Activated naive CD4-positive, alpha-beta T cell treated with anti-CD3 and anti-CD28 coated beads for 36 hours (primary cell): ENCODE measurements at regions of chr12 and their contacts with region 1.

Region 1: GRCh38 chr12:89040146-89040964 is 311.9 kb downstream of the DUSP6 start:
- DNase-seq: peak; percentile 94
- H3K4me3 Mint-ChIP-seq: no peak overlapping the region
- H3K27ac Mint-ChIP-seq: peak overlapping the region; percentile 82
- H3K4me1 Mint-ChIP-seq: peaks cover 46% of the 10 kb centered on the region
- H3K27me3 Mint-ChIP-seq: no peaks in the 10 kb centered on the region

Region 2: DNA sequence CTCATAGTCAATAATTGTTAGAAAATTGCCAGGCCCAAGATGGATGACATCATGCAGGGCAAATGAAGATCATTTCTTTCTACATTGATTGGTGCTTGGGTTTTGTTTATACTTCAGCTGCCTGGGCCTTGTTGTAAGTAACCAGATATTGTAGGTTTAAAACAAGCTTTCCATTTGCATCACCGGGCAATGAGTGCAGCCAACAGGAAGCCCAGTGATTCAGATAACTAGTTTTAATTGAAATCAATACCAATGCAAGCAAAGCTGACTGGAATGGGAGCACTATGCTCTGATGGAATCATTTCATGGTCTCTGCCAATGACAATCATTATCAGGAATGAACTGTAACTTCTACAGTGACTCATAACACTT is 32.7 kb after region 1 on chr12:
- CTCF ChIA-PET with region 1: interaction called, 3 read pairs
- intact Hi-C with region 1: loop called (anchors 1 kb)
- DNase-seq: peak; percentile 32
- H3K4me3 Mint-ChIP-seq: no peak overlapping the region
- H3K27ac Mint-ChIP-seq: peak overlapping the region; percentile 57
- H3K4me1 Mint-ChIP-seq: peaks cover 36% of the 10 kb centered on the region
- H3K27me3 Mint-ChIP-seq: no peaks in the 10 kb centered on the region

Region 3: DNA sequence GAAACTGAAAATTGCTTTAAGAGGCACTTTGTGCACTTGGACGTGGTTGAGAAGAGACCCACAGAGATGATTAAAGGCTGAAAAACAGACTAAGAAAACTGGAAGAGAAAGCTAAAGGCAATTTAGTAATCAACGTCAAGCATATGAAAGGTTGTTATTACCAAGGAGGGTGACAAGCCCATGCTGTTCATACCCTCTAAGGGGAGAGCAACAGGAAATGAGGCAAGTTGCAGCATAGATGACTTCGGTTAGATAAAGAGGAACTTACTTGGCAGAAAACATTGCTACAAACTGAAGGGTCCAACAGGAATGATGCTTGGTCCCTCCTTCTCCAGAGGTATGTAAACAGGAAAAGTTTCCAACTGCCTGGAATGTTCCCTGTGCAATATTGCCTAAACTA is 204.2 kb after region 1 on chr12:
- CTCF ChIA-PET with region 1: no interaction called
- intact Hi-C with region 1: loop called (anchors 1 kb)
- DNase-seq: peak; percentile 57
- H3K4me3 Mint-ChIP-seq: peak overlapping the region; percentile 36
- H3K27ac Mint-ChIP-seq: peak overlapping the region; percentile 73
- H3K4me1 Mint-ChIP-seq: peaks cover 33% of the 10 kb centered on the region
- H3K27me3 Mint-ChIP-seq: no peaks in the 10 kb centered on the region

Region 4: GRCh38 chr12:89494411-89495231 is 454.3 kb after region 1 on chr12:
- CTCF ChIA-PET with region 1: interaction called, 3 read pairs
- intact Hi-C with region 1: loop called (anchors 1 kb)
- DNase-seq: peak; percentile 73
- H3K4me3 Mint-ChIP-seq: peak overlapping the region; percentile 5
- H3K27ac Mint-ChIP-seq: peak overlapping the region; percentile 77
- H3K4me1 Mint-ChIP-seq: peaks cover 17% of the 10 kb centered on the region
- H3K27me3 Mint-ChIP-seq: no peaks in the 10 kb centered on the region

Region 5: DNA sequence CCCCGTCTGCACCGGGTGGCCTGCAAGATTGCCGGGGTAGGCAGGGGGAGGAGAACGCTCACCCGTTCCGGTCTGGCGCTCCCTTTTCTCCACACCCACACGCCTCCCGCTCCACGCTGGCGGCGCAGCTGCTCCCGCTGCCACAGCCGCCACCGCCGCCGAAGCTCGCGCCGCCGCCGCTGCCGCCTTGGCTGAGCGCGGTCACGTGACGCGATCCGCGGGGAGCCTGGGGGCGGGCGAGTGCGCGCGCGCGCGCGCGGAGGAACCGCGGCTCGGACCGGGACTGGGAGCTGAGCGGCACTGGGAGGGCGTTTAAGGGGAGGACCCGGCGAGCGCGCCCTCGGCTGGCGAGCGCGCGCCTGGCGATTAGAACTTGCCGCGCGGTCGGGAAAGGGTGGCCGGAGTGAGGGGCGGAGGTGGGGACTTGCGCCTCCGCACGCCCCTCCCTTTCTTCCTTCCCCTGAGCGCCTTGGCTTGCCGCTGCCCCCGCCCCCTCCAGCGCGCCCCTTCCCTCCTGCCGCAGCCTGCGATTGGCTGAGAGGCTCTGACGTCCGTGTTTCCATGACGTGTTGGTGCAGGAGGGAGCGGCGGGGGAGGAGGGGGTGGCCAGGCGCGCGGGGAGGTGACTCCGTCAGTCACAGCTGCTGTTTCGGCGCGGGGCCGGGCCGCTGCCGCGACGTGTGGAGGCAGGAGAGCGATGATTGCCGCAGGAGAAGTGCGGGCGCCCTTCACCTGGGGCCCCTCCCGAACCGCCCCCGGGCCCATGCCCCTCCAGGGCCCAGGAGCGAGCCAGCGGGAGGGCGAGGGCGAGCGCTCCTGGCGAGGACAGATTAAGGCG is 669.0 kb after region 1 on chr12:
- CTCF ChIA-PET with region 1: no interaction called
- intact Hi-C with region 1: loop called (anchors 2 kb)
- DNase-seq: peak; percentile 99
- H3K4me3 Mint-ChIP-seq: peak overlapping the region; percentile 79
- H3K27ac Mint-ChIP-seq: peak overlapping the region; percentile 71
- H3K4me1 Mint-ChIP-seq: peaks cover 32% of the 10 kb centered on the region
- H3K27me3 Mint-ChIP-seq: no peaks in the 10 kb centered on the region

Region 6: GRCh38 chr12:89882050-89882449 is 841.7 kb after region 1 on chr12:
- CTCF ChIA-PET with region 1: no interaction called
- intact Hi-C with region 1: loop called (anchors 2 kb)
- DNase-seq: peak; percentile 53
- H3K4me3 Mint-ChIP-seq: no peak overlapping the region
- H3K27ac Mint-ChIP-seq: peak overlapping the region; percentile 63
- H3K4me1 Mint-ChIP-seq: peaks cover 42% of the 10 kb centered on the region
- H3K27me3 Mint-ChIP-seq: no peaks in the 10 kb centered on the region